ENCODE measurements at regions of chr4 and their contacts with region 1.

Region 1: GRCh38 chr4:186587416-186588018 is 32.1 kb upstream of the MTNR1A start:
- H3K4me3 Mint-ChIP-seq: no peak overlapping the region
- H3K27ac Mint-ChIP-seq: no peak overlapping the region
- H3K4me1 Mint-ChIP-seq: no peaks in the 10 kb centered on the region
- H3K27me3 Mint-ChIP-seq: no peaks in the 10 kb centered on the region

Region 2: GRCh38 chr4:186296481-186296880 is 291.0 kb before region 1 on chr4:
- intact Hi-C with region 1: loop called (anchors 1 kb)
- H3K4me3 Mint-ChIP-seq: no peak overlapping the region
- H3K27ac Mint-ChIP-seq: no peak overlapping the region
- H3K4me1 Mint-ChIP-seq: no peaks in the 10 kb centered on the region
- H3K27me3 Mint-ChIP-seq: peaks cover 16% of the 10 kb centered on the region

Region 3: GRCh38 chr4:186920483-186920882 is 333.0 kb after region 1 on chr4:
- intact Hi-C with region 1: no loop called
- H3K4me3 Mint-ChIP-seq: no peak overlapping the region
- H3K27ac Mint-ChIP-seq: no peak overlapping the region
- H3K4me1 Mint-ChIP-seq: no peaks in the 10 kb centered on the region
- H3K27me3 Mint-ChIP-seq: no peaks in the 10 kb centered on the region